PC-9 (cell line): ENCODE measurements at regions of chr5 and their contacts with region 1.

Region 1: GRCh38 chr5:31397926-31398557 is 133.9 kb downstream of the DROSHA start:
- DNase-seq: no peak
- H3K4me3 ChIP-seq: no peak overlapping the region
- H3K27ac ChIP-seq: no peak overlapping the region
- H3K4me1 ChIP-seq: peaks cover 31% of the 10 kb centered on the region
- H3K27me3 ChIP-seq: no peaks in the 10 kb centered on the region
- CTCF ChIP-seq: no peak

Region 2: DNA sequence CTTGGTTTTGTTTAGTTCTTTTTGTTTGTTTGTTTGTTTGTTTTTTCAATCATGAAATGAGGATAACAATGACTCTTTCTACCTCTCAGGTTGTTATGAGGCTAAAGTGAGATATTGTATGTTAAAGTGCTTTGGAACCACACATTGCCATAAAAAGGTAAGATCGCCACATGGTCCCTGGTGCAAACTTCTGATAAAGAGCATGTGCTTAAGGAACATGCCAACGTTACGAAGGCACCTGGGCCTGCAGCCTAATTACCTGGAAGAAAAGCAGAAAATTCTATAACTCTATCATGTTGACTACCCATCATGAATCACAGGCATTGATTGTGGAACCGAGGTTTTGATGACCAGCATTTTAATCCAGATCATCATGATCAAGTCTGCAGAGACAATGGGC is 18.0 kb before region 1 on chr5:
- CTCF ChIA-PET with region 1: no interaction called
- POLR2A ChIA-PET with region 1: no interaction called
- intact Hi-C with region 1: no loop called
- DNase-seq: no peak
- H3K4me3 ChIP-seq: no peak overlapping the region
- H3K27ac ChIP-seq: no peak overlapping the region
- H3K4me1 ChIP-seq: no peaks in the 10 kb centered on the region
- H3K27me3 ChIP-seq: no peaks in the 10 kb centered on the region
- CTCF ChIP-seq: no peak

Region 3: DNA sequence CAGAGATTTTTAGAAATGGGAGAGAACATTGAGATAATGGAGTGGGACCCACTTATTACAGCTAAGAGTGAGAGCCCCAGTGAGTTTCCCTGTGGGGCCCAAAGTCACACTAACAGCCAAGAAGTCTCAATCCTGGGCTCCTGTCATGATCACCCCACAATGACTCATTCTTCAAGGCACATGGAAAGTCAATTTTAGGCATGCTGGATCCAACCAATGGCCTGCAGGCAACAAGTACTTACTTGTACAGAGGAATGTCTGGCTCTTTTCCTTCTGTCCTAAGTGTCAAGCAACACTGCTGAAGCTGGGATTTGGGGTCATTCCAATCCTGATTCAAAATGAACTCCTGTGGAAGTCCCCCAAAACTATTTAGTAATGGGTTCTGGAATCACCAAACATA is 10.8 kb after region 1 on chr5:
- CTCF ChIA-PET with region 1: no interaction called
- POLR2A ChIA-PET with region 1: no interaction called
- intact Hi-C with region 1: loop called (anchors 2 kb)
- DNase-seq: peak; percentile 53 to 82
- H3K4me3 ChIP-seq: no peak overlapping the region; the same call in 1 of the 2 replicates
- H3K27ac ChIP-seq: peak overlapping the region; percentile 63
- H3K4me1 ChIP-seq: peaks cover 26% of the 10 kb centered on the region
- H3K27me3 ChIP-seq: no peaks in the 10 kb centered on the region
- CTCF ChIP-seq: no peak